A549 (cell line): ENCODE measurements at regions of chr13 and their contacts with region 1.

Region 1: GRCh38 chr13:27362064-27362883 is 62.1 kb upstream of the GTF3A start:
- DNase-seq: peak; percentile 81
- ATAC-seq: peak; percentile 97 to 98
- H3K4me3 ChIP-seq: peak overlapping the region; percentile 42
- H3K27ac ChIP-seq: peak overlapping the region; percentile 53 to 82; a peak in 4 of 6 replicates
- H3K4me1 ChIP-seq: peaks cover 4% of the 10 kb centered on the region; the same call in 1 of the 3 replicates
- CTCF ChIP-seq: peak; percentile 73
- EP300 ChIP-seq: no peak
- POLR2A ChIP-seq: no peak
- RAD21 ChIP-seq: peak; percentile 80 to 85

Region 2: GRCh38 chr13:26946684-26947343 is 415.5 kb before region 1 on chr13:
- CTCF ChIA-PET with region 1: interaction called, 197 read pairs
- POLR2A ChIA-PET with region 1: no interaction called
- DNase-seq: peak; percentile 50 to 71
- ATAC-seq: peak; percentile 92
- H3K4me3 ChIP-seq: no peak overlapping the region
- H3K27ac ChIP-seq: no peak overlapping the region
- H3K4me1 ChIP-seq: no peaks in the 10 kb centered on the region
- CTCF ChIP-seq: peak; percentile 72
- EP300 ChIP-seq: no peak
- POLR2A ChIP-seq: no peak
- RAD21 ChIP-seq: peak; percentile 79 to 89

Region 3: DNA sequence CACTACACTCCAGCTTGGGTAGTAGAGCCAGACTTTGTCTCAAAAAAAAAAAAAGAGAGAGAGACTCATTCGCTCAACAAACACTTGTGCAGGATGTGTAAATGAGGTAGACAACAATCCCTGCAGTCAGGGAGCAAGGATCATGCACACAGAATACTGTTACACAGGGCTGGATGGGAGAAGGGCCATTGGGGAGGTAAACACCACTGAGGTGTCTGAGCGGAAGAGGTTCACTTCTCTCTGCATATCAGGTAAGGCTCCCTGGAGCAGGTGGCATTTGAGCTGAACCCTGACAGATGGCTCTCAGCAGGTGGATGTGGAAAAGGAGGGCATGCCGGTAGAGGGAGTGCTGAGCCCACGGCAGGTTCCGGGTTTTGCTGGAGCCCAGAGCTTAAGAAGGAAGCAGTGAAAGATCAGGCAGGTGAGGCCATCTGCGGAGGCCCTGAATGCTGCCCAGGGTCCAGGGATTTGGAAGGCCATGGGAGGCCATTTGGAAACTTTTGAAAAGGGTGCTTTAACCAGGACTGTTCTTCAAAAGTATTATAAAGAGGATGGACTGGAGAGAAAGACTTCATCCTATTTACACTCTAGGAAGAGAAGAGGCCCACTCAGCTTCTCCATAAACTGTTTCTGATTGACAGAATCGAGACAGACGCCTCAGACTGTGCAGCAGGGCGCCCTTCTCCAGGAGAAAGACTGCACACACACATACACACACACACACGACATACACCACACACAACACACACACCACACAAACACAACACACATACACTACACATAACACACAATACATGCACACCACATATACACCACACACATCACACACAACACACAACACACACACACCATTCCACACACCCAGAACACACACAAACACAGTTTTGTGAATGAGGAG is 390.0 kb before region 1 on chr13:
- CTCF ChIA-PET with region 1: interaction called, 56 read pairs
- POLR2A ChIA-PET with region 1: interaction called, 3 read pairs
- DNase-seq: peak in 1 of 2 experiments; percentile 80
- ATAC-seq: peak; percentile 88 to 90
- H3K4me3 ChIP-seq: no peak overlapping the region
- H3K27ac ChIP-seq: peak overlapping the region in 1 of 2 experiments; percentile 45; a peak in 1 of 6 replicates
- H3K4me1 ChIP-seq: peaks cover 9% of the 10 kb centered on the region
- CTCF ChIP-seq: peak; percentile 42
- EP300 ChIP-seq: no peak
- POLR2A ChIP-seq: no peak
- RAD21 ChIP-seq: peak; percentile 66 to 78

Region 4: DNA sequence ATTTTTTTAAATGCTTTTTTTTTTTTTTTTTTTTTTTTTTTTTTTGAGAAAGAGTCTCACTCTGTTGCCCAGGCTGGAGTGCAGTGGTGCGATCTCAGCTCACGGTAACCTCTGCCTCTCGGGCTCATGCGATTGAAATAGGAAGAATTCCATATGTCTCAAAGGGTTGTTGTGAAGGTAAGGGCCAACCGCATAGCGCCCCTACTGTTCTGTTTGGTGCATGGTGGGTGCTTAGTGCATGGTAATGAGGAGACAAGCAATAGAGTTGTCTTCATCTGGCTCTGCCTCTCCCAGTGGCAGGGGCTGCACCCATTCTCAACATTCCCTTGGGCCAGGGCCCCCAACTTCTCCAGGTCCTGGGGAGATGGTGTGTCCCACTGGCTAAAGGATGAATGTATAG is 23.0 kb before region 1 on chr13:
- CTCF ChIA-PET with region 1: interaction called, 13 read pairs
- POLR2A ChIA-PET with region 1: no interaction called
- DNase-seq: peak; percentile 37 to 73
- ATAC-seq: peak; percentile 80 to 94
- H3K4me3 ChIP-seq: no peak overlapping the region
- H3K27ac ChIP-seq: no peak overlapping the region
- H3K4me1 ChIP-seq: peaks cover 11% of the 10 kb centered on the region; the same call in 1 of the 3 replicates
- CTCF ChIP-seq: peak; percentile 39; the same call in 2 of the 3 replicates
- EP300 ChIP-seq: no peak
- POLR2A ChIP-seq: no peak
- RAD21 ChIP-seq: peak in 1 of 2 experiments; percentile 42; a peak in 2 of 5 replicates

Region 5: DNA sequence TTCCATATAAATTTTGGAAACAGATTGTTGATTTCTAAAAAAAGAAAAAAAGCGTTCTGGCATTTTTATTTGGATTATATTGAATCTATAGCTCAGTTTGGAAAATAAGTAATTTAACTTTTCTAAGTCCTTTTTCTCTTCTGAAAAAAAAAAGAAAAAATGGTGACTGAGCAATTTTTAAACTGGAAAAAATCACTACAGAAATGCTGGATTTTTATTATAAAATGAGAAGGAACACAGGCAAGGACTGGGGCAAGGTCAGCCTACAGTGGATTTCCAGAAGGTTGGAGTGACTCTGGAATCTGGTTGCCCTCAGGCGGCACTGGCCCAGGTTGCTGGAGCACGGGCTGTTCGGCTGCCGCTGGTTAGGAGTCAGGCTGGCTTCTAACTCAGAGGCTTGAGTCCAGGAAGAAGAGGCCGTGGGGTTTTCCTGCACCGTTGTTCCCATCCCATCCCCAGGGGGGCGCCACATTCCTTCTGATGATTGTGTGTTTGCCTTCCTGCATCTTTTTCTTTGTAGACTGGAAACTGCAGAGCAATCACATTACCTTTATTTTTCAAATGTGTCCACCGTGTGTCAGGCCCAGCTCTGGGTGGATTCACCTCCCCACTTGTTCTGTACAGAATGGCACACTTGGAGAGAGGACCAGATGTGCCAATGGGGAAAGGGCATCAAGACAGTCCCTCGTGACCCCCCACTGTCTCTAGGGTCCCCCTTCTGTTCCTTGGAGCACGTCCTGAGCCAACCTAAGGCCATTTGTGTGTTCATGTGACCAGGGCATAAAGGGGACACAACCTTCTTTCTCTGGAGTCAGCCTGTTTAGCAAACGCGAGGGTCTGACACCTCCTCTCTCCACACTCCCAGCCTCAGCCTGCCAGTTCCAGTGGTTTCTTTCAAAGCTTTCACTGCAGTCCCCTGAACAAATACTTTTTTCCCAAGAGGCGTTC is 17.7 kb after region 1 on chr13:
- CTCF ChIA-PET with region 1: interaction called, 96 read pairs
- POLR2A ChIA-PET with region 1: no interaction called
- DNase-seq: peak; percentile 35 to 67
- ATAC-seq: peak; percentile 25 to 62; a peak in 3 of 6 replicates
- H3K4me3 ChIP-seq: no peak overlapping the region
- H3K27ac ChIP-seq: peak overlapping the region; percentile 3 to 63; a peak in 1 of 6 replicates
- H3K4me1 ChIP-seq: 0 out of 3 replicates have a peak, but pooled peaks cover 8% of the 10 kb centered on the region
- CTCF ChIP-seq: peak; percentile 42
- EP300 ChIP-seq: no peak
- POLR2A ChIP-seq: no peak
- RAD21 ChIP-seq: peak; percentile 36 to 58; a peak in 3 of 5 replicates

Region 6: GRCh38 chr13:27516103-27516502 is 153.8 kb after region 1 on chr13:
- CTCF ChIA-PET with region 1: no interaction called
- POLR2A ChIA-PET with region 1: no interaction called
- DNase-seq: no peak
- ATAC-seq: no peak
- H3K4me3 ChIP-seq: no peak overlapping the region
- H3K27ac ChIP-seq: no peak overlapping the region
- H3K4me1 ChIP-seq: no peaks in the 10 kb centered on the region
- CTCF ChIP-seq: no peak
- EP300 ChIP-seq: no peak
- POLR2A ChIP-seq: no peak
- RAD21 ChIP-seq: no peak

Region 7: DNA sequence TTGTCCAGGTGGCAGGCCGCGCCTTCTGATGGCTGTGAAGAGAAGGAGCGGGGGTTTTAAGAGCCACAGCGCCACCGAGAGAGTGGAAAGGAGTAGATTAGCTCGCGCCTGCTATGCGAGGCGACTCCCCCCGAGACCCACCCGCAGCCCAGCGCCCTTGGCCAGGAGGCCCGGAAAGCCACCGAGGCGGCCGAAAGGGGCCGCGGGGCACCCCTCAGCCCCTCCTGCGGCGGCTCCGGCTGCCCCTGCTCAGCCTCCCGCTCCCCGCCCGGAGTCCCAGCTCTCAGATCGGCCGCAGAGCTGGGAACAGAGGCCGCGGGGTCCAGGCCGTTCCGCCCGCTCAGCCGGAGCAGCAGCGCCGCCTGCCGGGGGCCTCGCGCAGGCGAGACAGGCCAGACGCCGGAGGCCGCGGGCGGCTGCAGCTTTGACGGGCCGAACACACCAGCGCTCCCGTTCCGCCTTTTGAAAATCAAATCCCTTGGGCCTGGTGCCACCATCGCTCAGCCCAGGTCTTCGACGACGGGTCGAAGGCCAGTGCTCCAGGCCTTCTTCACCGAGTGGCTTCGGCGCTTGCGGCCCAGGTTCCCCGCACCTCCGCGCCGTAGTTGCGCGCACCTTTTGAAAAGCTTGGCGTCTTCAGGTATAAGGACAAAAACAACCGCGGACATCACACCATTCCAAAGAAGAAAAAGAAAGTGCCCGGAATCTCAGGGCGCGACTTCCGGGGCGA is 591.6 kb after region 1 on chr13:
- CTCF ChIA-PET with region 1: interaction called, 22 read pairs
- POLR2A ChIA-PET with region 1: interaction called, 3 read pairs
- DNase-seq: peak; percentile 57 to 82
- ATAC-seq: peak; percentile 94 to 98
- H3K4me3 ChIP-seq: peak overlapping the region; percentile 60
- H3K27ac ChIP-seq: peak overlapping the region; percentile 92 to 99
- H3K4me1 ChIP-seq: 0 out of 3 replicates have a peak, but pooled peaks cover 2% of the 10 kb centered on the region
- CTCF ChIP-seq: peak; percentile 76
- EP300 ChIP-seq: no peak
- POLR2A ChIP-seq: no peak
- RAD21 ChIP-seq: peak; percentile 44 to 76